Transverse colon (tissue), 4 donors: ENCODE measurements at regions of chr11 and their contacts with region 1.

Region 1: DNA sequence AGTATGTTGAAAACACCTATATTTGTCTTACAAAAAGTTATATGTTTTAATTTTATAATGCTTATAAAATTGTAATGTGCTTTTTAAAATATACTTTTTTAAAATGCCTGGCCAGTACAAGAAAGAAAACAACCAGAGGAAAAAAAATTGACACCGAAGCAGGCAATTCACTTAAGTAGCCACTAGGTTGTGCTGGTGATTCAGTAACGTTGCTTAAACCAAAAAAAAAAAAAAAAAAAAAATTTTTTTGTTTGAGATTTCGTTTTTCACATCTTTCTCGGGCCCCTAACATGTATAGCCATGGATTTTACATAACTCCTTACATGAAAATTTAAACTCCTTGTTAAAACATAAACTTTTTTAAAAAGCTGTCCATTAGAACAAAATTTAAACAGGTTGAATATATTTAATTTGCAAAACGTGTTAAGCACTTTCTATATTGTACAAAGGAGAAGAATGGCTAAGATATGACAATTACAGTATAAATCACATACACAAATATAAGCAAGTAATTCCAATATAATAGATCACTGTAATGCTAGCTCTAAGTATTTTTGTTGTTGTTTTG is 9.2 kb downstream of the OR8B4 start:
- DNase-seq: no peak
- H3K4me3 ChIP-seq: no peak overlapping the region
- H3K27ac ChIP-seq: no peak overlapping the region
- H3K4me1 ChIP-seq: no peaks in the 10 kb centered on the region
- H3K27me3 ChIP-seq: peaks cover 17% of the 10 kb centered on the region
- CTCF ChIP-seq: peak; percentile 34 to 77 (median 56)
- EP300 ChIP-seq: no peak
- POLR2A ChIP-seq: no peak

Region 2: GRCh38 chr11:124577716-124578427 is 162.4 kb after region 1 on chr11:
- in situ Hi-C with region 1: loop called in 3 of 4 experiments (anchors 10 kb)
- intact Hi-C with region 1: no loop called
- DNase-seq: no peak
- H3K4me3 ChIP-seq: no peak overlapping the region
- H3K27ac ChIP-seq: no peak overlapping the region
- H3K4me1 ChIP-seq: no peaks in the 10 kb centered on the region
- H3K27me3 ChIP-seq: peaks cover 20% of the 10 kb centered on the region
- CTCF ChIP-seq: no peak
- EP300 ChIP-seq: no peak
- POLR2A ChIP-seq: no peak

Region 3: DNA sequence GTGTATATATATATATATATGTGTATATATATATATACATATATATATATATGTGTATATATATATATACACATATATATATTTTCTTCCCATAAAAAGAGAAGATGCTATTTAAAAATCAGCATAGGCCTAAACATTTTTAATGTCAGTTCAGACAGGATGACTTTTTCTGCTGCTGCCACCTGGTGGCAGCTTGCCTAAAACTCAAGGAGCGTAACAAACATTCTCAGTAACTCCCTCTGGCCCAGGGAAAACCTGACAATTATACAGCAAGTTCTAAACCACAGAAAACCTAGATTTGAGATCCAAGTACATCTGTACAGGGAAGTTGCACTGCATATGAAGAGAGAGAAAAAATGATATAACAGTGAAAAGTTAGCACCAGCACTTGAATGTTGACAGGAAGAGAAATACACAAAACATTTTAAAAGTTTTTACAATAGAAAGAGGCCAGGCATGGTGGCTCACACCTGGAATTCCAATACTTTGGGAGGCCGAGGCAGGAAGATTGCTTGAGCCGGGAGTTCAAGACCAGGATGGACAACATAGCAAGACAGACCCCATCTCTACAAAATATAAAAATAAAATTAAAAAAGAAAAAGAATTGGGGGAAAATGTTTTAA is 170.9 kb after region 1 on chr11:
- in situ Hi-C with region 1: loop called in 3 of 4 experiments (anchors 5 to 10 kb)
- intact Hi-C with region 1: no loop called
- DNase-seq: peak; percentile 44
- H3K4me3 ChIP-seq: no peak overlapping the region
- H3K27ac ChIP-seq: no peak overlapping the region
- H3K4me1 ChIP-seq: peaks cover 0 to 12% (median 6%) of the 10 kb centered on the region in 4 donors
- H3K27me3 ChIP-seq: peaks cover 60% of the 10 kb centered on the region
- CTCF ChIP-seq: peak; percentile 42 to 58 (median 53)
- EP300 ChIP-seq: no peak
- POLR2A ChIP-seq: no peak